ENCODE measurements at regions of chr4 and their contacts with region 1.

Region 1: GRCh38 chr4:25913851-25914669 is at the start of gene SMIM20:
- DNase-seq: peak; percentile 85
- ATAC-seq: peak; percentile 92
- H3K4me3 Mint-ChIP-seq: peak within 1 kb of the TSS; percentile 99
- H3K27ac Mint-ChIP-seq: peak within 1 kb of the TSS; percentile 97
- H3K4me1 Mint-ChIP-seq: peaks cover 36% of the 10 kb centered on the region
- H3K27me3 Mint-ChIP-seq: no peaks in the 10 kb centered on the region
- CTCF ChIP-seq: no peak
- total RNA-seq, gene SMIM20: 16.6 and 18.7 TPM in 2 replicates

Region 2: DNA sequence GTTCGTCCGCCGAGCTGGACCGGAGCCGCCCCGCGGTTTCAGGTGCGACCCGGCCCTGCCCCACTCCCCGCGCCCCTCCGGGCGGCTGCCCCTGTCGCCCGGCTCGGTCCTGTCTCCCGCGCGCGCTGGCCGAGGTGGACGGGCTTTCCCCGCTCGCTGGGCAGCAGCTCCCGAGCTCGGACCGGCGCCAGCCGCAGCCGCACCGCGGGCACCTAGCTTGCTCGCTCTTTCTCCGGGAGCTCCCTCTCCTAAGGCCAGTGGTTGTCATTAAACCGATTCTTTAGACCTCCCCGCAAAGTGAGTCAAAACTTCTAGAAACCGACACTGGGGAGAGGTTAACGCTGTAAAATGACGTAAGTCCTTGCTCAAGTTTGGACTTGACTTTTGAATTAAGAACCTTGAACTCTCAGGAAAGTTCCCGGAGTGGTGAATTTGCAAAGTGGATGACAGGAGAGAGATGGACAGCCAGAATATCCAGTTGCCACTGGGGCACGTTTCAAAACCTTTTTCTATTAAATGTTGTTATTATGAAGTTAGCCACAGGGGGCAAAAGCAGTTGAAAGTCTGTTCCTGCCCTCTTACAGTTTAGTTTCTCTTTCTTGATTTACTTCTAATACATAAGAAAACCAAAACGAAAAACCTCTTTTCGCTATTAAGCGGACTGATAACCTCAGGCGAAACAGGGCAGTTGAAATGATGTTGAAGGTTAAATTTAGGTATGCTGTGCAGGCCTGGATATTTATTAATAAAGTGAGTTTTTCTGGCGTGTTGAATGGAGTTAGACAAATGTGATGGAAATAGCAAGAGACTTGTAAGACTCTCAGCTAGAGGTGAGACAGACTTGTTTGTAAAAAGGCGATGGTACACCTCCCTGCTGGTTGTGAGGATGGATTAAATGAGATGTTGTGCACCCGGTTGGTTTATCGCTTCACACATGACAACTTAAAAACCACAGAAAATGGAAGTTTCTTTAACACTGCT is 679.4 kb before region 1 on chr4:
- CTCF ChIA-PET with region 1: no interaction called
- POLR2A ChIA-PET with region 1: no interaction called
- intact Hi-C with region 1: loop called (anchors 5 kb)
- DNase-seq: no peak
- ATAC-seq: peak; percentile 53
- H3K4me3 Mint-ChIP-seq: peak overlapping the region; percentile 90
- H3K27ac Mint-ChIP-seq: peak overlapping the region; percentile 95
- H3K4me1 Mint-ChIP-seq: peaks cover 47% of the 10 kb centered on the region
- H3K27me3 Mint-ChIP-seq: no peaks in the 10 kb centered on the region
- CTCF ChIP-seq: no peak

Region 3: DNA sequence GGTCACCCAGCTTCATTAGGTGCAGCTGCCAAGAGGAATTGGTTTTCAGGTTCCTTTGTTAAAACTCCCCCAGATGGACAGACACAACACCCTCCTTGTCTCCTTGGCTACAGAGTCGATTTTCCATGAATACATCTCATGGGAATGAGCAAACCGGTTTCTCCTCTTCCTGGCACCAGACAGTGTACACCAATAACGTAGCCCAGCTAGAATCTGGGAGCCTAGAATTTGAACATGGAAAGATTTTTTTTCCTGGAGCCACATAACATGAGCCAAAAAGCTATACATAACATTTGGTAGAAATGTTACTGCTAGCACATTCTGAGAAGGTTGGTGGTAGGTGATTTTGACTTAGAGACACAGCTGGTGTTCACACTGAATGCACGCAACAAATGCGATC is 321.3 kb before region 1 on chr4:
- CTCF ChIA-PET with region 1: no interaction called
- POLR2A ChIA-PET with region 1: no interaction called
- intact Hi-C with region 1: no loop called
- DNase-seq: no peak
- ATAC-seq: no peak
- H3K4me3 Mint-ChIP-seq: no peak overlapping the region
- H3K27ac Mint-ChIP-seq: no peak overlapping the region
- H3K4me1 Mint-ChIP-seq: no peaks in the 10 kb centered on the region
- H3K27me3 Mint-ChIP-seq: no peaks in the 10 kb centered on the region
- CTCF ChIP-seq: no peak

Region 4: DNA sequence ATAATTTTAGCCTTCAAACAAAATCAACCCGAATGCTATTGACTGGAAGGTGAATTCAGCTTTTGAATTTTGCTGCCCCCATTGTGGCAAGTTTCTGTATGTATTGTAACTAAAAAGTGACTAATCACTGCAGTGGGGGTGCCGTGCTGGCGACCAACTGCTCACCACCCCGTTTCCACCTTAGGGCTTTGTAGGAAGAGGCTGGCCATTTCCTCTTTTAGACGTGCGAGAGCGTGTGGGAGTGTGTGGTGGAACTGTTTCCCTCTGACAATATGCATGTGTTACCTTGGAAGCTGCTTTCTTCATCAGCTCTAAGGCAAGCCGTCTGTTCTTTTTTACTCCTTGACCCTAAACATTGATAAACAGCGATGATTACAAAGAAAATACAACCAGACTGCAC is 130.1 kb before region 1 on chr4:
- CTCF ChIA-PET with region 1: no interaction called
- POLR2A ChIA-PET with region 1: no interaction called
- intact Hi-C with region 1: no loop called
- DNase-seq: no peak
- ATAC-seq: no peak
- H3K4me3 Mint-ChIP-seq: no peak overlapping the region
- H3K27ac Mint-ChIP-seq: peak overlapping the region; percentile 50
- H3K4me1 Mint-ChIP-seq: peaks cover 2% of the 10 kb centered on the region
- H3K27me3 Mint-ChIP-seq: no peaks in the 10 kb centered on the region
- CTCF ChIP-seq: no peak

Region 5: DNA sequence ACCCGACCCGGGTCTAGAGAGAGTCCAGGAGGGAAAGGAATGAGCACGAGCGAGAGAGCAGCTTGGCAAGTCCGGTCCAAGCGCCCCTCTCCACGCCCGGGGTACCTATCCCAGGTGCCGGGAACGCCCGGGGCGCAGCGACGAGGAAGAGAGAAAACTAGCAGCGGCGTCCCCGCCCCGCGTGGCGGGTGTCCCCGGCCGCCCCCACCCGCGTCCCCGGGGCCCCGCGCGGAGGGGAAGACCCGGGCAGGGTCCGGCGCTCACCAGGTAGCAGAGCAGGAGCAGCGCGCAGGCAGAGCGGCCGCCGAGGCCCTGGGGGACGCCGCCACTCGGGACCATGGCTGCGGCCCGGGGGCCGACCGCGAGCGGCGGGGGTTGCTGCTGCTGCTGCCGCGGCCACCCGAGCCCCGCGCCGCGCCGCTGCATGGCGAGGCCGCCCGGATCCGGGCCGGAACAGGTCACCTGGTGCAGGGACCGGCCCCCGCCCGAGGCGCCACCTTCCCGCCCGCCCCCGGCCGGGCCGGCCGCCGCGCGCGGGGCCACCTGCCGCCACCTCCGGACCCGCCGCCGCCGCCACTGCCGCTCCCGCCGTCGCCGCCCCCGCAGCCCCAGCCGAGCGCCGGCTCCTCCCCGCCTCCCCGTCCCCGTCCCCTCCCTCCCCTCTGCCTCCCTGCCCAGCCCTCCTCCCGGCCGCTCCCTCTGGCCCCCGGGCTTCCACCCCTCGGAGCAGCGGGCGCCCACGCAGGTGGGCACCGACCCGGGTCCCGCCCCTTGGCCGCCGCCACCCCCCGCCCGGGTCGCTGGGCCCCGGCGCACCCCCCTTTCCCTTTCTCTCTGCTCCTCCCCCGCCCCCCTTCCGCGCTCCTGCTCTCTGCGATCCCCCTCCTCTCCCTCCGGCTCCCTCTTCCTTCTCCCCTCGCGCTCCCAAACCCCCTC is 51.4 kb before region 1 on chr4 and contains the start of gene SEL1L3:
- CTCF ChIA-PET with region 1: interaction called, 8 read pairs
- POLR2A ChIA-PET with region 1: interaction called, 116 read pairs
- intact Hi-C with region 1: loop called (anchors 1 kb)
- DNase-seq: peak; percentile 68
- ATAC-seq: peak; percentile 39
- H3K4me3 Mint-ChIP-seq: peak within 1 kb of the TSS; percentile 98
- H3K27ac Mint-ChIP-seq: peak within 1 kb of the TSS; percentile 99
- H3K4me1 Mint-ChIP-seq: peaks cover 84% of the 10 kb centered on the region
- H3K27me3 Mint-ChIP-seq: no peaks in the 10 kb centered on the region
- CTCF ChIP-seq: no peak
- total RNA-seq, gene SEL1L3: 102 and 113 TPM in 2 replicates

Region 6: DNA sequence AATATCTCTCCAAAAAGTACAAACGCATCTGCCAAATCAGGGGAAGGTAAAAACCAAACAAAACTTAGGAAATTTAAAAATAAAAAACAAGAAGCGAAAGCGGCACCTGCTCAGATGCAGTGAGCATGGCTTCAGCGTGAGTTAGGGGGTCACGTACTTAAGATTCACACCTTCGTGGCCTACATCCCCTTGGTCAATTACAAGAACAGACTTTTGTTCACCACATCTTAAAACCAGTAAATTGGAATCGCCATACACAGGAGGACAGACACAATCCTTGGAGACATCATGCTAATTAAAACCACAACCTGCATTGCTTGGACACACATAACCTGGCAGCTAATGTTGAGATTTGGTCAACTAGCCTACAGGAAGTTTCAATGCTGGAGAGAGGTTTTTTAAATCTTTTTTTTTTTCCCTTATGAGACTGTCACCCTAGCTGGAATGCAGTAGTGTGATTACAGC is 38.7 kb before region 1 on chr4:
- CTCF ChIA-PET with region 1: interaction called, 3 read pairs
- POLR2A ChIA-PET with region 1: interaction called, 99 read pairs
- intact Hi-C with region 1: loop called (anchors 1 kb)
- DNase-seq: no peak
- ATAC-seq: peak; percentile 38
- H3K4me3 Mint-ChIP-seq: peak overlapping the region; percentile 29
- H3K27ac Mint-ChIP-seq: peak overlapping the region; percentile 84
- H3K4me1 Mint-ChIP-seq: peaks cover 94% of the 10 kb centered on the region
- H3K27me3 Mint-ChIP-seq: no peaks in the 10 kb centered on the region
- CTCF ChIP-seq: no peak

Region 7: DNA sequence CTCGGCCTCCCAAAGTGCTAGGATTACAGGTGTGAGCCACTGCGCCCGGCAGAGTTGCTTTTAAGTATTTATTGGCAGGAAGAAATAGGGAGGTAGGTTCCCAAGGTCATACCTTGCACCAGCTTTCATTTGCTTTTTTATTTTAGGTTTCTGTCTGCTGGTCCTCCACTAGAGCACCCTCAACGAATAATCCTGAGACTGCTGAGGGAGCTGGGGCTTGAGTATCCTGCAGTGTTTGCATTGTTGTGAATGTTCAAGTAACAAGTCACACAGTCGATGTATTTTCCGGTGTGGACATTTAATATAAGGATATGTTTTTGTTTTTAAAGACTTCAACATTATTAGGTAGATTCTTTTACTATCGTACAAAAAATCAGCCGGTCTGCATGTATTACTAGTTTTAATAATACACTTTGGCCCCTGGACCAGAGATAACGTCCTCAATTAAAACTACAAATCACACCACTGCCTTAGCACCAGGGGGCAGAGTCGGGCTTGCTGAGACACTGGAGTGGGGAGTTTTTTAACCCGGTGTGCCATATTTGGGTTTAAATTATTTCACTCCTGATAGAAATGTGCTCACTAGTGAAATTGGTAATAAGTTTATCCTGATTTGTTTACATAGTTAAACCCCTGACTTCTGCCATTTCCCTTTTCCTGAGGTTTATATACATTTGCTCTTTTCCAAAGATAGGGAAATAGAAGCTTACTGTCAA is 11.6 kb after region 1 on chr4:
- CTCF ChIA-PET with region 1: interaction called, 6 read pairs
- POLR2A ChIA-PET with region 1: interaction called, 11 read pairs
- intact Hi-C with region 1: no loop called
- DNase-seq: no peak
- ATAC-seq: peak; percentile 57
- H3K4me3 Mint-ChIP-seq: no peak overlapping the region
- H3K27ac Mint-ChIP-seq: no peak overlapping the region
- H3K4me1 Mint-ChIP-seq: no peaks in the 10 kb centered on the region
- H3K27me3 Mint-ChIP-seq: no peaks in the 10 kb centered on the region
- CTCF ChIP-seq: no peak

Region 8: DNA sequence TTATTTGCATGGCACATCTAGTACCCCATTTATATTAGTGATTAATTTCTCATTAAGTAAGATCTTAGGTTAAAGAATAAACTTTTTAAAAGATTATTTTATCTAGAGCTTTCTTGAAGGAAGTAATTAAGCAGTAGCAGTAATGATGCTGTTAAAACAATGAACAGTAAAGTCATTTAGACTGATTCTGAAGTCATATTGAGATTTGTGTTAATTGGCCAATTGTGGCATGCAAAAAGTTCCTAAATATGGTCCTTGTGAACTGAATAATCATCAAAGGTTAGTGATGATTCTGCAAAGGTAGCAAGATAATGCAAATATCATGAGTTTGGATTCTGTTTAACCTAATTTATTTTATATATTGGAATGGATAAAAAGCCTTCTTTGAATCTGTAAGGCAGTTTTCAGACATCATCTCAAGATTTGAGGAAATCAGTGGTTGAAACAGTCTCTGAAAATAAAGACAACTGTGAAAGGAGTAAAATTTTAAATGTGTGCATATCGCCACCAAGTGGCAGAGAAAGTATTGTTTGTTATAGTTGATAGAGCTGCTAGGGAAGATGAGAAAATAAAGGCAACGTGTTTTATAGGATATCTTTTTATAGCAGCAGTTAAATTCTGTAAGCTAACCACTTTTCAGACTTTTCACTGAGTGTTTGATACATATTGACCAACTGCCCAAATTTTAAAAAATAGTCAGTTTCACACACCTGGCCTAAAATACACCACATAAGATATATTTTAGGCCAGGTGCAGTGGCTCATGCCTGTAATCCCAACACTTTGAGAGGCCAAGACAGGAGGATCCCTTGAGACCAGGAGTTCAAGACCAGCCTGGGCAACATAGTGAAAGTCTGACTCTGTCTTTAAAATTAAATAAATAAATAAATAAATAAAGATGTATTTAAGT is 496.6 kb after region 1 on chr4:
- CTCF ChIA-PET with region 1: no interaction called
- POLR2A ChIA-PET with region 1: no interaction called
- intact Hi-C with region 1: no loop called
- DNase-seq: no peak
- ATAC-seq: no peak
- H3K4me3 Mint-ChIP-seq: no peak overlapping the region
- H3K27ac Mint-ChIP-seq: no peak overlapping the region
- H3K4me1 Mint-ChIP-seq: no peaks in the 10 kb centered on the region
- H3K27me3 Mint-ChIP-seq: no peaks in the 10 kb centered on the region
- CTCF ChIP-seq: no peak

Region 9: DNA sequence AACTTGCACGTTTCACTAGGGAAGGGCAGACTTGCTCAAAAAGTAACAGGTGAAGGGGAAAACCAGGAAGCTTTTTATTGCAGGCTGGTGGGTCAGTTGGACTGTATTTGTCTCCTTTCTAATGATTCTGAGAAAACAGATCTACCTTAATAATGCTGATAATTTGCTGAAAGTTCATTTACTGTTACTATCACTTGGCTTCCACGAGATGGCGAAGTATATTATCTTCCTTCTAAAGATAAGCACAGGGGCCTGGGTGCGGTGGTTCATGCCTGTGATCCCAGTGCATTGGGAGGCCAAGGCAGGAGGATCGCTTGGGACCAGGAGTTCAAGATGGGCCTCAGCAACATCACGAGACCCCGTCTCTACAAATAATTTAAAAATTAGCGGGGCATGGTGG is 559.8 kb after region 1 on chr4:
- CTCF ChIA-PET with region 1: no interaction called
- POLR2A ChIA-PET with region 1: no interaction called
- intact Hi-C with region 1: no loop called
- DNase-seq: no peak
- ATAC-seq: no peak
- H3K4me3 Mint-ChIP-seq: no peak overlapping the region
- H3K27ac Mint-ChIP-seq: no peak overlapping the region
- H3K4me1 Mint-ChIP-seq: no peaks in the 10 kb centered on the region
- H3K27me3 Mint-ChIP-seq: no peaks in the 10 kb centered on the region
- CTCF ChIP-seq: no peak

Measured in activated B cell treated with CpG ODN at 0.5 μM for 24 hours (primary cell).